Dorsolateral prefrontal cortex (tissue), 120 donors: ENCODE measurements at regions of chr15 and their contacts with region 1.

Region 1: DNA sequence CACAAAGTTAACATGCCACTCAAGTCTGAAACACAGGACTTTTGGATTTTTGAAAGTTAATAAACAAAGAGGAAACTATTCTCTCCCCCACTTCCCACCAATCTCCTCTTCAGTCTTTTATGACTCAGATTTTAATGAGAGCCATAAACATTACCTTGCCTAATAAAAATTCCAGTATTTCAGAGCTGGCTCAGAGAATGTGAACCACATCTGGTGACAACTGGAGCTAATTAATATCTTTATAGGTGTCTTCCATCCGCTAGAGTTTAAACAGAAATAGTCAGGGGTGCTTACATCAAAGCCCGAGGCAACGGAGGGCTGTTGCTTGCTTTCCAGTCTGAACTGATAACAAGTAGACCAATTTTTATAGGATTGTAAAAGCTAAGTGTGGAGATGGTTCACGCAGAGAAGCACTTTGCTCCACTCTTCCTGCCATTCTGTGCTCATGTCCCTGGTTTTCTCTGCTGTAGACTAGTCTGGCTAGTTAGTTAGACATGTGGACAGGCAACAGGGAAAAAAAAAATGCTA is 363.6 kb downstream of the NR2F2 start:
- DNase-seq: no peak
- H3K4me3 ChIP-seq: no peak overlapping the region
- H3K27ac ChIP-seq: no peak overlapping the region
- H3K27me3 ChIP-seq: peaks cover 0 to 21% (median under 1%) of the 10 kb centered on the region in 45 donors
- CTCF ChIP-seq: no peak

Region 2: DNA sequence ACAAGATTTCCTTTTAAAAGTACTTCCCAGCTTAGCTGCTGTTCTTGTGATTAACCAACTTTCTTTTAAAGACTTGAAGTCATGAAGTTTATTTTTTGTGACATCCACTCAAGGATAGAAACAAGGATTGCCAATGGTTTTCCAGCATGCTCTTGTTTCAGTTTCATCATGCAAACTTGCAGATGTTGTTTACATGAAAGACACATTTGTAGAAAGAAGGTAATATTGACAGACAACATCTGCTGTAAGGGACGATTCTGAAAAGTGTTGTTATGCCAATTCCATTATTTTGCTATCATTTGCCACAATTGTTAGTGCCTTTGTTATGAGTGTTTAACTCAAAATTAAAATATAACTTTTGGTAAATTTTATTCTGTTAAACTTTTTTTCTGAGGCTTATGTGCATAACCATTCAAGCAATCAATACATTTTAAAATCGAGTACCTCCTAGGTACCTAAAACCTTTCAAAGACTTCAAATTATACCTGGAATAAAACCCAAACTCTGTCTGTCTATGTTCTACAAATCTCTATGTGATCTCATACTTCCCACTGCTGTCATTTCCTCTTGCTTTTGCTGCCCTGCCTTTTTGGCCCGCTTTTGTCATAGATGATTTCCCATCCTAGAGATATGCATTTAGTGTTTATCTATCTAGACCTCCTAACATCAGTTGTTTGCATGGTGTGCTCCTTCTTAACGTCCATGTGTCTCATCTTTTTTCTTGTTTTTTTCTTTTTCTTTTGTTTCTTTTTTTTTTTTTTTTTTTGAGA is 266.8 kb after region 1 on chr15:
- intact Hi-C with region 1: loop called in 1 of 2 experiments (anchors 5 kb)
- DNase-seq: no peak
- H3K4me3 ChIP-seq: no peak overlapping the region
- H3K27ac ChIP-seq: no peak overlapping the region
- H3K27me3 ChIP-seq: peaks cover 0 to 13% (median 0%) of the 10 kb centered on the region in 45 donors
- CTCF ChIP-seq: no peak